ENCODE measurements at regions of chrX and their contacts with region 1.

Region 1: DNA sequence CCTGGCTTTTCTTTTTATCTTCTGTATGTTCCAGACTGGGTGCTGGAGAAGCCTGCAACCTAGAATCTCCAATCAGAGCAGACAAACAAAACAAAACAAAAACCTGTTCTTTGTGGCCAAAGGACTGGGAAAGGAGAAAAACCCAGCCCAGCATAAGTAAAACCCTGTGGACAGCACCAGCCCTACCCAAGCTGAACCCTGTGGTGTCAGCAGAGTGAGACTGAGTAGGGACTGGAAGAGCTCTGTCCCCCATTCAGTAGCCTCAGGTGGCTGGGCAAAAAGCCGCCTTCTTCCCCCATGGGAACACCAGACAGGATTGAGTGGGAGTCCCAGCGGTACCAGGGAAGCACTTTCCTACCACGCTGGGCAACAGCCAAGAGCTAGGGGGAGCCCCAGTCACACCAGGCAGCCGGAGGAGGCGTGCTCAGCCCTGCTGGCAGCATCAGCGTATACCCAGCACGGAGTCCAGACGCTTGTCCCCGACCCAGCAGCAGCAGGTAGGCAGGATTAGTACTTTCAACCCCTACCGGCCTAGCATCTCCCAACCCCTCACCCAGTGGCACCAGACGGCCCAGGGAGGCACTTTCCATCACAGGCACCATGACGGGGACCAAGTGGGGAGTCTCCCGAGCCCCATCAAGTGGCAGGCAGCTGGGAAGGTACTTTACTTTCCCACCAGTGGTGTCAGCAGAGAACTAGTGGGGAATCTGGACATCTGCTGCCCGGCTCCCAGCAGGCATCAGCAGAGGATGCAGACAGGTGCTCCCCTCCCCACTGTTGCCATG is 8.6 kb upstream of the JADE3 start:
- DNase-seq: peak; percentile 87
- ATAC-seq: peak; percentile 99
- H3K4me3 ChIP-seq: peak overlapping the region; percentile 78
- H3K27ac ChIP-seq: no peak overlapping the region
- H3K4me1 ChIP-seq: no peaks in the 10 kb centered on the region; the same call in 1 of the 2 replicates
- H3K27me3 ChIP-seq: no peaks in the 10 kb centered on the region
- CTCF ChIP-seq: peak; percentile 88

Region 2: GRCh38 chrX:46626566-46626965 is 277.1 kb before region 1 on chrX:
- CTCF ChIA-PET with region 1: no interaction called
- POLR2A ChIA-PET with region 1: no interaction called
- intact Hi-C with region 1: no loop called
- DNase-seq: no peak
- ATAC-seq: no peak
- H3K4me3 ChIP-seq: no peak overlapping the region
- H3K27ac ChIP-seq: no peak overlapping the region
- H3K4me1 ChIP-seq: peaks cover 10% of the 10 kb centered on the region
- H3K27me3 ChIP-seq: no peaks in the 10 kb centered on the region
- CTCF ChIP-seq: no peak

Region 3: GRCh38 chrX:46758906-46759644 is 144.6 kb before region 1 on chrX and contains the start of gene SLC9A7:
- CTCF ChIA-PET with region 1: interaction called, 3 read pairs
- POLR2A ChIA-PET with region 1: no interaction called
- intact Hi-C with region 1: loop called (anchors 5 kb)
- DNase-seq: peak; percentile 84
- ATAC-seq: peak; percentile 81
- H3K4me3 ChIP-seq: peak within 1 kb of the TSS; percentile 98
- H3K27ac ChIP-seq: peak within 1 kb of the TSS; percentile 68
- H3K4me1 ChIP-seq: peaks cover 32% of the 10 kb centered on the region
- H3K27me3 ChIP-seq: no peaks in the 10 kb centered on the region
- CTCF ChIP-seq: peak; percentile 80
- total RNA-seq, gene SLC9A7: 73.7 and 74.3 TPM in 2 replicates

Region 4: DNA sequence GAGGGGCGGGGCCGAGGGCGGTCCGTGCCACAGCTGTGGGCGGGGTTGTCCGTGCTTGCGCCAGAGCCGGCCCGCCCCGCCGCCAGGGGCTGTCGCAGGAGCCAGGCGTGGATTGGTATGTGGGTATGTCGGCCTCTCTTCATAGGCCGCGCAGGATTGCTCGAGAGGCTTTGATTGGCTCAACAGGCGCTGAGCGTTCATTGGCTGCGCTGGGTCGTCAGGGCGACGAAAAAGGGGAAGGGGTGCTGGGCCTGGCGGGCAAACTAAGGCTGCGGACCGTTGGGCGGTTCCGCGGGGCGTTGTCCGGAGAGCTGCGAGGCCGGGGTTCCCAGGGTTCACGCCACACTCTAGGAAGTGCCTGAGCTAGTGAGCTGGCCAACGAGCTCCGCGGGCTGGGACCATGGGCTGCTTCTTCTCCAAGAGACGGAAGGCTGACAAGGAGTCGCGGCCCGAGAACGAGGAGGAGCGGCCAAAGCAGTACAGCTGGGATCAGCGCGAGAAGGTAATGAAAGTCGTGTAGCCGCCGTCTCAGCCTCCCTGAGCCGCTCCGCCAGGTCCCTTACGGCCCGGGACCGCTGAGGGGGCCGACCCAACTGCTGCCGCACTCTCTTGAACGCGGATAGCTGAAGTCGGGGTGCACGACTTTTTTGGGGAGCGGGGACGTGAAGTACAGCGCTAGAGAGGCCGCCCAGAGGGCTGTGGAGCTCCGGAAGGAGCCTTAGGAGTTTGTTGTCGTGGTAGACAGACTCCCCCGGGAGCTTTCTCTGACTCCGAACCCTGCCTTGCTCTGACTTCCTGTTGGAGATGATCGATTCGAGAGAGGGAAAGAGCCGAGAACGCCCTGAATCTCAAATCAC is 66.7 kb before region 1 on chrX and contains the start of gene RP2:
- CTCF ChIA-PET with region 1: no interaction called
- POLR2A ChIA-PET with region 1: no interaction called
- intact Hi-C with region 1: loop called (anchors 1 kb)
- DNase-seq: peak; percentile 94
- ATAC-seq: peak; percentile 95
- H3K4me3 ChIP-seq: peak within 1 kb of the TSS; percentile 82
- H3K27ac ChIP-seq: peak within 1 kb of the TSS; percentile 68
- H3K4me1 ChIP-seq: peaks cover 19% of the 10 kb centered on the region
- H3K27me3 ChIP-seq: no peaks in the 10 kb centered on the region
- CTCF ChIP-seq: no peak
- total RNA-seq, gene RP2: 11.0 and 12.4 TPM in 2 replicates

Region 5: DNA sequence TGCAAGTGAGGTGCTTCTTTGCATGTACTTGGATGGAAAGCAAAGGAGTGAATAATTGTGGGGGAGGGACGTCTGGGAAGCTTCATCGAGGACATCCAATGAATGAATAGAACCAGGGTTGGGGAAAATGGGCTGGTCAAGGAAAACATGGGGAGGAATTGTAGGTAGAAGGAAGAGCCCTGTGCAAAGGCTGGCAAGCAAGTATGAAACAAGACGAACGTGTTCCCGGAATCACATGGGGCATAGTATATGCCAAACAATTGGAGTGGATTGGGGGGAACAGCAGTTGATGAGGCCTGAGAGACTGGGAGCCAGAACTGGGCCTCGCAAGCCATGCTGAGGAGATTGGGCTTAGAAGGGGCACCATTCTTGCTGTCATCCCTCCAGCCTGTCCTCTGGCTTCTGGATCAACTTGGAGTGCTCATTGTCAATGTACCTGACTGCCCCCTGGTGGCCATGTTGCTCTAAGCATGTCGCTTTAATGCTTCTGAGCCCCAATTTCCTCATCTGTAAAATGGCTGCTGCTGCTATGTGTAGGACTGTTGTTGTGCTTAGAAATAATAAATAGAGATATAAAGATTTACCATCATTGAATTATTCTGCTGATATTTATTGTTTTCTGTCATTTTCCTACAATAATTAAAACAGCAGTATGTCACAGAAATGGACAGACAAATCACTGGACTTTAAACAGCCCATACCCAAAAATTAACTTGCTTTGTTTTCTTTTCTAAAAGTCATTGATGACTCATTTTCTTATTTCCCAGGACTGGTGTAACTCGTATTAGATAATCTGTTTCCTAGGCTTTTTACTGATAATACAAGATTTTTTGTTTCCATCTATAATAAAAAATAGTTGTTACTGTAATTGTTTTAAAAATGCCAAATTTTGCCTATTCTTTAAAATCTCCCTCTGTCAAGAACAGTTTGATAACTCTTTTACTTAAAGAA is 75.0 kb after region 1 on chrX:
- CTCF ChIA-PET with region 1: no interaction called
- POLR2A ChIA-PET with region 1: no interaction called
- intact Hi-C with region 1: loop called (anchors 2 kb)
- DNase-seq: peak; percentile 84
- ATAC-seq: peak; percentile 81
- H3K4me3 ChIP-seq: no peak overlapping the region; the same call in 1 of the 2 replicates
- H3K27ac ChIP-seq: peak overlapping the region; percentile 76
- H3K4me1 ChIP-seq: peaks cover 20% of the 10 kb centered on the region
- H3K27me3 ChIP-seq: no peaks in the 10 kb centered on the region
- CTCF ChIP-seq: peak; percentile 88

Region 6: GRCh38 chrX:47030339-47030738 is 126.7 kb after region 1 on chrX:
- CTCF ChIA-PET with region 1: no interaction called
- POLR2A ChIA-PET with region 1: no interaction called
- intact Hi-C with region 1: loop called (anchors 1 kb)
- DNase-seq: peak; percentile 89
- ATAC-seq: peak; percentile 64
- H3K4me3 ChIP-seq: no peak overlapping the region
- H3K27ac ChIP-seq: no peak overlapping the region
- H3K4me1 ChIP-seq: no peaks in the 10 kb centered on the region
- H3K27me3 ChIP-seq: no peaks in the 10 kb centered on the region
- CTCF ChIP-seq: peak; percentile 74

Region 7: DNA sequence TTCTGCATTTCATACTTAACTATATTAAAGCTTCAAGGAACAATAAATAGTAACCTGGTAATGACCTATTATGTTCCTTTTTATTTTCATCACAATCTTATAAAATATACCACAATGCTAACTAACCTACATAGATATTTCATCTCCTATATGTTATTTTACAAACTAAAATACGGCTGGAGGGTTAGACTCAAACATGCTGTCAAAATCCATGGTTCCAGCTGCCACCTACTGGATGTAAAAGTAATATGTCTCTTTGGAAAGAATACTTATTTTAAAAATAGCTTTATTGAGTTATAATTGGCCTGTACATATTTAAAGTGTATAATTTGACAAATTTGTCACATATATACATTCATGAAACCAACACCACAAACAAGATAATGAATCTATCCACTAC is 189.6 kb after region 1 on chrX:
- CTCF ChIA-PET with region 1: no interaction called
- POLR2A ChIA-PET with region 1: no interaction called
- intact Hi-C with region 1: loop called (anchors 1 kb)
- DNase-seq: peak; percentile 54
- ATAC-seq: no peak
- H3K4me3 ChIP-seq: no peak overlapping the region
- H3K27ac ChIP-seq: no peak overlapping the region
- H3K4me1 ChIP-seq: no peaks in the 10 kb centered on the region
- H3K27me3 ChIP-seq: no peaks in the 10 kb centered on the region
- CTCF ChIP-seq: peak; percentile 69